ENCODE measurements at regions of chr4 and their contacts with region 1.

Region 1: GRCh38 chr4:4541661-4542570 is at the start of gene STX18:
- DNase-seq: peak; percentile 92
- H3K4me3 Mint-ChIP-seq: peak within 1 kb of the TSS; percentile 90
- H3K27ac Mint-ChIP-seq: peak within 1 kb of the TSS; percentile 86
- H3K4me1 Mint-ChIP-seq: peaks cover 46% of the 10 kb centered on the region
- H3K27me3 Mint-ChIP-seq: no peaks in the 10 kb centered on the region
- total RNA-seq, gene STX18: 20.2 to 23.2 TPM

Region 2: GRCh38 chr4:4443821-4444220 is 98.1 kb before region 1 on chr4:
- CTCF ChIA-PET with region 1: no interaction called
- POLR2A ChIA-PET with region 1: no interaction called
- intact Hi-C with region 1: no loop called
- DNase-seq: no peak
- H3K4me3 Mint-ChIP-seq: no peak overlapping the region
- H3K27ac Mint-ChIP-seq: no peak overlapping the region
- H3K4me1 Mint-ChIP-seq: peaks cover 20% of the 10 kb centered on the region
- H3K27me3 Mint-ChIP-seq: no peaks in the 10 kb centered on the region

Region 3: DNA sequence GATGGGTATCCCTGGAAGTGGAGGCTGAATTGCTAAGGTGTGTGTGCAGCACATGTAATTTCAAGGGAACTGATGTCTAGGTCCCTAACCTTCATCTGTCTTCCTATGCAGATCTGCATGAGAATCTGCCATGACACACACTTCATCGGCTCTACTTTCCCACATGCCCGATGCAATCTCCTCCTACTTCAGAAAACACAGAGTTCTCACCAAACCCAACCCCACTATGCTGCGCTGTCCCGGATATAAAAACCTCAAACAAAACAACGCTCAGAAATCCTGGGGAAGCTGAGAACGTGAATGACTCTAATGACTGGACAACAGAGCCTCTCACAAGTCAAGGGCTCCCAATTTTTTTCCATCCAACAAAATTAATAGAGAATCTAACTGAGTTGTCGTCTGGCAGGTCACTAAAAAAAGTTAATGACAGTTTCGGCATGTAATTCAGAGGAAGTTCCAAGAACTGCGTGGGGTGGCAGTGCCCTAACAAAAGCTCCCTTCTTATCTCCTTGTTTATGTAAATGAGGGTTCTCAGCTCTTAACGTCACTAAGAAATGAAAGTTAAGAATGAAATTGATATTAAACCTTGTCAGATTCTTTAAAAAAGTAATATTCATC is 39.1 kb before region 1 on chr4:
- CTCF ChIA-PET with region 1: no interaction called
- POLR2A ChIA-PET with region 1: no interaction called
- intact Hi-C with region 1: loop called (anchors 1 kb)
- DNase-seq: peak; percentile 54
- H3K4me3 Mint-ChIP-seq: peak overlapping the region; percentile 62
- H3K27ac Mint-ChIP-seq: peak overlapping the region; percentile 35
- H3K4me1 Mint-ChIP-seq: peaks cover 15% of the 10 kb centered on the region
- H3K27me3 Mint-ChIP-seq: no peaks in the 10 kb centered on the region

Region 4: DNA sequence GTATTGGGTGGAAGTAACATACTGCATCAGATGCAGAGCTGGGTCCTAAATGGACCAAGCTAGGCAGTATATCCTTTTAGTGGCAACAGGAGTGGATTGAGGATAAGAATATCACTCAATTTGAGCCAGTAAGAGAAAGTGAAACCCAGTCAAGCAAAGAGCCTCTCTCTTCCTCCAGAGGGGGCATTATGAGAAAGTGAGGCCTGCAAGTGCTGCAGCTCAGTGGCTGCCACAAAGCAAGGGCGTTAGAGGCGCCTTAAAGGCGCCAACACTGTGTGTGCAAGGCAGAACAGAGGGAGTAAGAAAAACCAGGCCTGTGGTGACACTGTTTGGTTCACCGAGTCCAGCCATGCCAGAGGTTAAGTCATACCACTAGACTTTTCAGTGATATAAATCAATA is 17.6 kb before region 1 on chr4:
- CTCF ChIA-PET with region 1: interaction called, 6 read pairs
- POLR2A ChIA-PET with region 1: interaction called, 3 read pairs
- intact Hi-C with region 1: loop called (anchors 2 kb)
- DNase-seq: peak; percentile 57
- H3K4me3 Mint-ChIP-seq: no peak overlapping the region
- H3K27ac Mint-ChIP-seq: no peak overlapping the region
- H3K4me1 Mint-ChIP-seq: peaks cover 29% of the 10 kb centered on the region
- H3K27me3 Mint-ChIP-seq: no peaks in the 10 kb centered on the region

Region 5: DNA sequence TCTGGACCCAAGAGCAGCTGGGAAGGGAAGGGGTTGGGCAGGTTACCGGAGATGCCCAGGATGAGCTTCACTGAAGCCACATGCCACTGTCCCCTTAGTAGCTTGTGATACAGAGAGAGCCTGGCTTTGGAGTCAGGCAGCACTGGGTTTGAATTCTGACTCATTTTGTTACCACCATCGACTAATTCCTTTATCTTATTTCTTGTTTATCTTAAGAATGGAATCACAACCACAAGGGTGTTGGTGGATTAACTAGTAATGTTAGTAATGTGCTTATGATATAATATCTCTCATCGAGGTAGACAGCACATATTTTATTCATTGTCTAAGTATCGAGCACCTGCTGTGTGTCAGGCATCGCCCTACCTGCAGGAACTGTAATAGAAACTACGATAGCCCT is 17.7 kb after region 1 on chr4:
- CTCF ChIA-PET with region 1: interaction called, 3 read pairs
- POLR2A ChIA-PET with region 1: interaction called, 4 read pairs
- intact Hi-C with region 1: loop called (anchors 2 kb)
- DNase-seq: peak; percentile 13
- H3K4me3 Mint-ChIP-seq: no peak overlapping the region
- H3K27ac Mint-ChIP-seq: no peak overlapping the region
- H3K4me1 Mint-ChIP-seq: peaks cover 8% of the 10 kb centered on the region
- H3K27me3 Mint-ChIP-seq: no peaks in the 10 kb centered on the region

Region 6: DNA sequence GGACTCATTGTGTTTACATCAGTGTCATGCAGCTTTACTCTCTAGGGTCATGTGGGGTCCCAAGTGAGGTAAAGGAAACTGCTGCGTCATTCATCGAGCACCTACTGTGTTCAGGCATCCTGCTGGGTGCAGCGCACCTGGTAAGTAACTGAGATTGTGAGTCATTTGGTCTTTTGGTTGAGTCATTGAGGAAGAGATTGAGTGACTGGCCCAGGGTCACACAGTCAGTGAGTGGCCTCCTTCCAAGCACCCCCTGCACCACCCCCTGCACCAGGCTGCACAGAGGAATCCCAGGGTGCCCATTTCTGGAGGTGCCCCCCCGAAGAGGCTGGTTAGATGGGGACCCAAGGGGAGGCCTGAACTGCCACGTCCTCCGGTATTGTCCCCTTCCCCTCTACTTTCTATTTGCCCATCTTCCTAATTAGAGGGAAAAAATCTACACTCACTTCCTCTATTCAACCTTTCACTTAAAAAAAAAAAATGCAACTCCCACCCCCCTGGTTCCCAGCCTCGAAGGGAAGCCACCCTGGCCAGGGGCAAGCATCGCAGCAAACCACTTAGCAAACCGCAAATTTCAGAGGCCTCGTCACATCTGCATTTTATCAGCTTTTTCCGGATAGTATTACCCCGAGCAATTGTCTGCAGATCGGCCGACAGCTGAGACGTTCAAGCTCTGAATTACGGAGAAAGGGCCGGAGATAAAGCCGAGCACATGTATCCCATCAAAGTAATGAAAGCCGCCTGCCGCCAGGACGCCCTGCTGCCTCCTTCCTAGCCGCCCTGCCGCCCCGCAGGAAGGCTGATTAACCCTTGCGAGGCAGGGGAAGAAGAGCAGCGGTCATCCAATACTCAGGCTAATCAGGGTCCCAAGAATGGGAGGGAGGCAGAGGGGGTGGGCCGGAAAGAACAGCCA is 221.2 kb after region 1 on chr4:
- CTCF ChIA-PET with region 1: no interaction called
- POLR2A ChIA-PET with region 1: no interaction called
- intact Hi-C with region 1: loop called (anchors 5 kb)
- DNase-seq: peak; percentile 79
- H3K4me3 Mint-ChIP-seq: peak overlapping the region; percentile 51
- H3K27ac Mint-ChIP-seq: peak overlapping the region; percentile 61
- H3K4me1 Mint-ChIP-seq: peaks cover 25% of the 10 kb centered on the region
- H3K27me3 Mint-ChIP-seq: peaks cover 7% of the 10 kb centered on the region

Region 7: DNA sequence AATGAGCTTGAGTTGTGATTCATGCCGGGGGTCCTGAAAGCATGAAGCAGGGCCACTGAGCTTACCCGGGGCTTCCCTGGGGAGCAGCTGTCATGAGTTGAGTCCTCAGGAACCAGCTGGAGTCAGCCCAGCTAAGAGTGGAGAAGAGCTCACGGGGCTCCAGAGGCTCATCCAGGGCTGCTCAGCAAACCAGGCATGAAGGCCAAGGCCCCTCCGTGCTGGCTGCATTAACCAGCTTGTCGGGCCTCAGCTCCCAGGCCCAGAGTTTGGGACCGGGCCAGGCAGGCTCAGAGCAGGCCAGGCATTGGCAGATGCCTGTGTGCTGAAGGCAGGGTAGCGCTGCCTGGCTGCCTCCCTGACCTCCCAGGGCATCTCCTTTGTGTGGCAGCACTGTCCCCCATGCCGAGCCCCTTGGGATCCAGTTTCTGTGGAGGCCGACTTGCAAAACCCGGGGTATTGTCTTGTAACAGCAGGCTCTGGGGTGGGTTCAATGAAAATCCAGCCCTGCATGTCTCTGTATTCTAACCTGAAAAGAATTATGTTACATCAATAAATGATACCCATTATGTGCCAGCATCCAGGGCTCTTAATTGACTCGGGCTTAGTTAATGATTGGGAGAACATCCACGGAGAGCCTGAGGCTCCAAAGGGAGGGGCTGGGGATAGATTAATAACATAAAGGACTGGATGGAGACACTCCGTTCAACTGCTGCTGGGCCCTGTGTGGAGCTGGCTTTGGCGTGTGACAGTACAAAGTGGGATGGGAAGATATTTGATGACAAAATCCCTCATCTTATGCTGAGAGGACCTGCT is 249.6 kb after region 1 on chr4:
- CTCF ChIA-PET with region 1: no interaction called
- POLR2A ChIA-PET with region 1: no interaction called
- intact Hi-C with region 1: no loop called
- DNase-seq: no peak
- H3K4me3 Mint-ChIP-seq: no peak overlapping the region
- H3K27ac Mint-ChIP-seq: no peak overlapping the region
- H3K4me1 Mint-ChIP-seq: no peaks in the 10 kb centered on the region
- H3K27me3 Mint-ChIP-seq: no peaks in the 10 kb centered on the region

Region 8: GRCh38 chr4:5452156-5452555 is 910.2 kb after region 1 on chr4:
- CTCF ChIA-PET with region 1: no interaction called
- POLR2A ChIA-PET with region 1: no interaction called
- intact Hi-C with region 1: no loop called
- DNase-seq: no peak
- H3K4me3 Mint-ChIP-seq: no peak overlapping the region
- H3K27ac Mint-ChIP-seq: no peak overlapping the region
- H3K4me1 Mint-ChIP-seq: no peaks in the 10 kb centered on the region
- H3K27me3 Mint-ChIP-seq: no peaks in the 10 kb centered on the region

Measured in activated CD4-positive, alpha-beta memory T cell treated with anti-CD3 and anti-CD28 coated beads for 36 hours (primary cell).